ENCODE measurements at regions of chr19 and their contacts with region 1.

Region 1: DNA sequence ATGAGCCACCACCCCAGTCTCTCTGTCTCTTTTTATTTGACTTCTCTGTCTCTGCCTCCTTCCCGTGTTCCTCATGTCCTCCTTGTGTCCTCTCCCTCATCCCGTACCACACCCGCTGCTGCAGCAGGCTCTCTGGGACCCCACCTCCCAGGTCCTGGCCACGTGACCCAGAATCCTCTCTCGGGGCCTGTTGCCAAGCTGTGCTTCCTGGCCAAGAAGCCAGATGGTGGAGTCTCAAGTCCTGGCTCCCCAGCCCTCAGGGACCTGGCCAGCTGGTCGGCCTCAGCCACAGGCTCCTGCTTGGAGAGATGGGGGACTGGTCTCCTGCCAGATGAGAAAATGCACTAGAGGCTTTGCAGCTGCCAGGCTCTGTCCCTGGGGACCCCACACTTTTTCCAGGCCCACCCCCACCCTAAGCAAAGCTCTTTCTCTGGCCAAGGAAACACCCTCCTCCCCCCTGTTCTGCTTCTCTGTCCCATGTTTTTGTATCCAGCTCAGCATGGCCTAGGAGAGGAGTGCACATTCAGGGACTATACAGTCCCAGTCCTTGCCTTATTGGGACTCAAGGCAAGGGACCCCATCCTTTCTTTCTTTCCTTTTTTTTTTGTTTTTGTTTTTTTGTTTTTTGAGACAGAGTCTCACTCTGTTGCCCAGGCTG is 34.3 kb upstream of the SHKBP1 start:
- DNase-seq: no peak
- ATAC-seq: no peak
- H3K4me3 Mint-ChIP-seq: no peak overlapping the region
- H3K27ac Mint-ChIP-seq: no peak overlapping the region
- H3K4me1 Mint-ChIP-seq: no peaks in the 10 kb centered on the region
- H3K27me3 Mint-ChIP-seq: peaks cover 31% of the 10 kb centered on the region
- CTCF ChIP-seq: no peak

Region 2: GRCh38 chr19:40523322-40524047 is 18.8 kb before region 1 on chr19:
- CTCF ChIA-PET with region 1: interaction called, 15 read pairs
- POLR2A ChIA-PET with region 1: no interaction called
- DNase-seq: peak; percentile 87
- ATAC-seq: peak; percentile 91
- H3K4me3 Mint-ChIP-seq: no peak overlapping the region
- H3K27ac Mint-ChIP-seq: no peak overlapping the region
- H3K4me1 Mint-ChIP-seq: peaks cover 6% of the 10 kb centered on the region
- H3K27me3 Mint-ChIP-seq: peaks cover 65% of the 10 kb centered on the region
- CTCF ChIP-seq: peak; percentile 75

Region 3: GRCh38 chr19:40529093-40529954 is 13.0 kb before region 1 on chr19:
- CTCF ChIA-PET with region 1: interaction called, 15 read pairs
- POLR2A ChIA-PET with region 1: interaction called, 3 read pairs
- DNase-seq: peak; percentile 93
- ATAC-seq: peak; percentile 57
- H3K4me3 Mint-ChIP-seq: peak overlapping the region; percentile 67
- H3K27ac Mint-ChIP-seq: peak overlapping the region; percentile 68; the same call in 1 of the 2 replicates
- H3K4me1 Mint-ChIP-seq: peaks cover 16% of the 10 kb centered on the region
- H3K27me3 Mint-ChIP-seq: peaks cover 41% of the 10 kb centered on the region
- CTCF ChIP-seq: peak; percentile 99

Region 4: DNA sequence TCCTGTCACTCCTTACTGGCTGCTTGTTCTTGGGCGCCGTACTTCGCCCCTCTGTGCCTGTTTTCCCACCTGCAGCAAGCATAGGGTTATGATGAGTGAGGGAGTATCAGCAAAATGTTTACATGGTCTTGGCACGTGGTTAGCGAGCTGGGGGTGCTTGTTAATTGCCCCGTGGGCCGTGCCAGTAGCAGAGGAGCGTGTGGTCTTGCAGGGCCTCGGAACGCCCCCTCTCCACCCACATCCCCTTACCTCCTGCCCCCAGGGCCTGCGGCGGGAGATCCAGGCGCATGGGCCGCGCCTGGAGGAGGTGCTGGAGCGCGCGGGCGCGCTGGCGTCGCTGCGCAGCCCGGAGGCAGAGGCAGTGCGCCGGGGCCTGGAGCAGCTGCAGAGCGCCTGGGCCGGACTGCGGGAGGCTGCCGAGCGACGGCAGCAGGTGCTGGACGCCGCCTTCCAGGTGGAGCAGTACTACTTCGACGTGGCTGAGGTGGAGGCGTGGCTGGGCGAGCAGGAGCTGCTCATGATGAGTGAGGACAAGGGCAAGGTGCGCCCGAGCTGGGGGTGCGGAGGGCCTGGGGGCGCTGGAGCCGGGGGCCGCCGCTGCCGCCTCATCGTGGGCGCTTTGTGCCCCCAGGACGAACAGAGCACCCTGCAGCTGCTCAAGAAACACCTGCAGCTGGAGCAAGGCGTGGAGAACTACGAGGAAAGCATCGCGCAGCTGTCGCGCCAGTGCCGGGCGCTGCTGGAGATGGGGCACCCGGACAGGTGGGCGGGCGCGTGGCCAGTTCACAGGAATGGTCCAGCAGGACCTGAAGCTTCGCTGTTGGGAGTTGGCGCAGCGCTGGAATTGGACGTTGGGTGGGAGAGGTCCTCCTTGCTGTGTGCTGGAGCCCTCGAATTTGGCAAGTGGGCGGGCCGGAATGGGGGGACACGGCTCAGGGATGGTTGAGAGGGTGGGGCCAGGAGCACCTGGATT is 11.8 kb after region 1 on chr19:
- CTCF ChIA-PET with region 1: interaction called, 32 read pairs
- POLR2A ChIA-PET with region 1: no interaction called
- DNase-seq: peak; percentile 72
- ATAC-seq: peak; percentile 86
- H3K4me3 Mint-ChIP-seq: peak overlapping the region; percentile 60
- H3K27ac Mint-ChIP-seq: no peak overlapping the region
- H3K4me1 Mint-ChIP-seq: peaks cover 13% of the 10 kb centered on the region
- H3K27me3 Mint-ChIP-seq: peaks cover 91% of the 10 kb centered on the region
- CTCF ChIP-seq: no peak

Region 5: DNA sequence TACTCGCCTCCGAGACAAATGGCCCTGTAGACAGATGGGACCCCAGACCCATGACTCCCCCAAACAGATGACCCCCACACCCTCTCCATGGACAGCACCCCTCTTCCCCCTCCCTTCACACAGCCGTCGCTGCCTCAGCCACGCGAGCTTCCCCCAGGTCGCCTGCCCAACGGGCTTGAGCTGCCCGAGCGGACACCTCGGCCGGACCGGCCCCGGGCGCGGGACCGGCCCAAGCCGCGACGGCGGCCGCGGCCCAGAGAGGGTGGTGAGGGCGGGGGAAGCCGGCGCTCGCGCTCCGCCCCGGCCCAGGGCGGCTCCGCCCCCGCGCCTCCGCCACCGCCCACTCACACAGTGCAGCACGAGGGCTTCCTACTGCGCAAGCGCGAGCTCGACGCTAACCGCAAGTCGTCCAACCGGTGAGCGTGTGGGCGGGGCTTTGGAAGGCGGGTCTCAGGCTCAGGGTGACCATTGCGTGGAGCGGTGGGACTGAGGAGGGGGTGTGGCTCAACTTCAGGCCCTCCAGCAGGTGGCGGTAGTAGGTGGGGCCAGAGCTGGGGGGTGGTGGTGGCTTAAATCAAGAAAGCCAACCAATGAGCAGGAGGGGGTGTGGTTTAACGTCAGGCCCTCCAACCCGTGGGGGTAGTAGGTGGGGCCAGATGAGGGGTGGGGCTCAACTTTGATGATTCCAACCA is 28.1 kb after region 1 on chr19:
- CTCF ChIA-PET with region 1: interaction called, 24 read pairs
- POLR2A ChIA-PET with region 1: interaction called, 3 read pairs
- DNase-seq: peak; percentile 100
- ATAC-seq: peak; percentile 96
- H3K4me3 Mint-ChIP-seq: peak overlapping the region; percentile 75
- H3K27ac Mint-ChIP-seq: no peak overlapping the region; the same call in 1 of the 2 replicates
- H3K4me1 Mint-ChIP-seq: peaks cover 15% of the 10 kb centered on the region
- H3K27me3 Mint-ChIP-seq: peaks cover 78% of the 10 kb centered on the region
- CTCF ChIP-seq: no peak

Region 6: GRCh38 chr19:40598121-40598917 is 56.0 kb after region 1 on chr19:
- CTCF ChIA-PET with region 1: interaction called, 43 read pairs
- POLR2A ChIA-PET with region 1: no interaction called
- DNase-seq: peak; percentile 93
- ATAC-seq: peak; percentile 32
- H3K4me3 Mint-ChIP-seq: peak overlapping the region; percentile 76
- H3K27ac Mint-ChIP-seq: peak overlapping the region; percentile 82; the same call in 1 of the 2 replicates
- H3K4me1 Mint-ChIP-seq: peaks cover 44% of the 10 kb centered on the region
- H3K27me3 Mint-ChIP-seq: peaks cover 82% of the 10 kb centered on the region
- CTCF ChIP-seq: peak; percentile 99